GM12878 (cell line): ENCODE measurements at regions of chr2 and their contacts with region 1.

Region 1: GRCh38 chr2:80489713-80490112 is 185.2 kb upstream of the LRRTM1 start:
- DNase-seq: no peak
- ATAC-seq: no peak
- H3K4me3 ChIP-seq: no peak overlapping the region
- H3K27ac ChIP-seq: no peak overlapping the region
- H3K4me1 ChIP-seq: no peaks in the 10 kb centered on the region
- H3K27me3 ChIP-seq: no peaks in the 10 kb centered on the region
- CTCF ChIP-seq: no peak
- EP300 ChIP-seq: no peak
- POLR2A ChIP-seq: no peak
- RAD21 ChIP-seq: no peak

Region 2: GRCh38 chr2:80473796-80474195 is 15.9 kb before region 1 on chr2:
- CTCF ChIA-PET with region 1: interaction called, 6 read pairs
- POLR2A ChIA-PET with region 1: interaction called, 319 read pairs
- RAD21 ChIA-PET with region 1: interaction called, 556 read pairs
- SMC1A ChIA-PET with region 1: interaction called, 559 read pairs
- in situ Hi-C with region 1: no loop called
- intact Hi-C with region 1: no loop called
- DNase-seq: no peak
- ATAC-seq: 0 out of 3 replicates have a peak, but pooled peaks have one; percentile 11
- H3K4me3 ChIP-seq: no peak overlapping the region
- H3K27ac ChIP-seq: no peak overlapping the region; the same call in 1 of the 2 replicates
- H3K4me1 ChIP-seq: peaks cover 8% of the 10 kb centered on the region
- H3K27me3 ChIP-seq: no peaks in the 10 kb centered on the region
- CTCF ChIP-seq: no peak
- EP300 ChIP-seq: no peak
- POLR2A ChIP-seq: no peak
- RAD21 ChIP-seq: no peak